ENCODE measurements at regions of chr12 and their contacts with region 1.

Region 1: GRCh38 chr12:7995266-7995963 is 37.1 kb upstream of the FOXJ2 start:
- DNase-seq: peak; percentile 93
- ATAC-seq: peak; percentile 80
- H3K4me3 Mint-ChIP-seq: no peak overlapping the region
- H3K27ac Mint-ChIP-seq: no peak overlapping the region
- H3K4me1 Mint-ChIP-seq: peaks cover 23% of the 10 kb centered on the region
- H3K27me3 Mint-ChIP-seq: no peaks in the 10 kb centered on the region

Region 2: GRCh38 chr12:7645394-7646177 is 349.8 kb before region 1 on chr12:
- CTCF ChIA-PET with region 1: interaction called, 3 read pairs
- POLR2A ChIA-PET with region 1: no interaction called
- intact Hi-C with region 1: loop called in 1 of 2 experiments (anchors 10 kb)
- DNase-seq: peak; percentile 49
- ATAC-seq: no peak
- H3K4me3 Mint-ChIP-seq: no peak overlapping the region
- H3K27ac Mint-ChIP-seq: no peak overlapping the region
- H3K4me1 Mint-ChIP-seq: peaks cover 7% of the 10 kb centered on the region
- H3K27me3 Mint-ChIP-seq: no peaks in the 10 kb centered on the region

Region 3: DNA sequence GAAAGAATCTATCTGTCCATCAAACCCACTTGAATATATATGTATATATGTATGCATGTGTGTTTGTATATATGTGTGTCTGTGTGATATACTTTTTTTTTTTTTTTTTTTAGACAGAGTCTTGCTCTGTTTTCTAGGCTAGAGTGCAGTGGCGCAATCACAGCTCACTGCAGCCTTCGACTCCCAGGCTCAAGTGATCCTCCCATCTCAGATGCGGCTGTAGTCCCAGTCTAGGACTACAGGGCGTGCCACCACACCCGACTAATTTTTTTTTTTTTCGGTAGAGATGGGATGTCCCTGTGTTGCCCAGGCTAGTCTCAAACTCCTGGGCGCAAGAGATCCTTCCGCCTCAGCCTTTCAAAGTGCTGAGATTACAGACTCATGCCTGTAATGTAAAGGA is 316.7 kb before region 1 on chr12:
- CTCF ChIA-PET with region 1: no interaction called
- POLR2A ChIA-PET with region 1: no interaction called
- intact Hi-C with region 1: loop called in 1 of 2 experiments (anchors 10 kb)
- DNase-seq: no peak
- ATAC-seq: no peak
- H3K4me3 Mint-ChIP-seq: no peak overlapping the region
- H3K27ac Mint-ChIP-seq: no peak overlapping the region
- H3K4me1 Mint-ChIP-seq: peaks cover 11% of the 10 kb centered on the region
- H3K27me3 Mint-ChIP-seq: peaks cover 2% of the 10 kb centered on the region

Region 4: DNA sequence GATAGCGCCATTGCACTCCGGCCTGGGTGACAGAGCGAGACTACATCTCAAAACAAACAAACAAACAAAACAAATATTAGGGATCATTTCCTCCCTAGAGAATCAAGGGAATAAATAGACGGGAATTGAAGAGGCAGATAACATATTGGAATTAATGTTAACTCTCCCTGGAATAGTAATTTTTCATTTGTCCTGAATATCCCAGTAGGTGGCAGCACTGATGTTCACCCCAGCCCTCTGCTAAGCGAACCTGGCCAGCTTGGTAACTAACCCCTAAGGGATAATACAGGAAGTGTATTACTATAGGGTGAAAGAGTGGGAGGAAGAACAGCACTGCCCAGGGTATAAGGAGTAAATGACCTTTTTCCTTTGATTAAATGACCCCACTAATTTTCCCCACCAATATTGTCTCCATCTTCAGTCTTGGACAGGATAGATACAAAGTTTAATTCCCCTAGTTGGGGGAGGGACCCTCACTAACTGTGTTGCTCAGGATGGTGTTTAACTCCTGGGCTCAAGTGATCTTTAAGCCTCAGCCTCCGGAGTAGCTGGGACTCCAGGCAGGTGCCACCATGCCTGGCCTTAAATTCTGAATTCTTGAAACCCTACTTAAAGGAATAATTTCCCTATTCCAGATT is 163.2 kb before region 1 on chr12:
- CTCF ChIA-PET with region 1: interaction called, 5 read pairs
- POLR2A ChIA-PET with region 1: no interaction called
- intact Hi-C with region 1: loop called in 1 of 2 experiments (anchors 1 kb)
- DNase-seq: peak; percentile 61
- ATAC-seq: peak; percentile 92
- H3K4me3 Mint-ChIP-seq: no peak overlapping the region
- H3K27ac Mint-ChIP-seq: no peak overlapping the region
- H3K4me1 Mint-ChIP-seq: peaks cover 3% of the 10 kb centered on the region
- H3K27me3 Mint-ChIP-seq: no peaks in the 10 kb centered on the region

Region 5: GRCh38 chr12:7859552-7859951 is 135.9 kb before region 1 on chr12:
- CTCF ChIA-PET with region 1: interaction called, 34 read pairs
- POLR2A ChIA-PET with region 1: no interaction called
- intact Hi-C with region 1: loop called (anchors 1 kb)
- DNase-seq: no peak
- ATAC-seq: no peak
- H3K4me3 Mint-ChIP-seq: no peak overlapping the region
- H3K27ac Mint-ChIP-seq: no peak overlapping the region
- H3K4me1 Mint-ChIP-seq: peaks cover 16% of the 10 kb centered on the region
- H3K27me3 Mint-ChIP-seq: no peaks in the 10 kb centered on the region

Region 6: GRCh38 chr12:7959701-7960121 is 35.7 kb before region 1 on chr12:
- CTCF ChIA-PET with region 1: interaction called, 16 read pairs
- POLR2A ChIA-PET with region 1: interaction called, 7 read pairs
- intact Hi-C with region 1: loop called (anchors 1 kb)
- DNase-seq: peak; percentile 60
- ATAC-seq: peak; percentile 34
- H3K4me3 Mint-ChIP-seq: peak overlapping the region; percentile 86
- H3K27ac Mint-ChIP-seq: peak overlapping the region; percentile 94
- H3K4me1 Mint-ChIP-seq: peaks cover 30% of the 10 kb centered on the region
- H3K27me3 Mint-ChIP-seq: no peaks in the 10 kb centered on the region

Region 7: GRCh38 chr12:7984900-7985299 is 10.5 kb before region 1 on chr12:
- CTCF ChIA-PET with region 1: no interaction called
- POLR2A ChIA-PET with region 1: no interaction called
- intact Hi-C with region 1: no loop called
- DNase-seq: no peak
- ATAC-seq: no peak
- H3K4me3 Mint-ChIP-seq: no peak overlapping the region
- H3K27ac Mint-ChIP-seq: no peak overlapping the region
- H3K4me1 Mint-ChIP-seq: peaks cover 17% of the 10 kb centered on the region
- H3K27me3 Mint-ChIP-seq: no peaks in the 10 kb centered on the region

Region 8: DNA sequence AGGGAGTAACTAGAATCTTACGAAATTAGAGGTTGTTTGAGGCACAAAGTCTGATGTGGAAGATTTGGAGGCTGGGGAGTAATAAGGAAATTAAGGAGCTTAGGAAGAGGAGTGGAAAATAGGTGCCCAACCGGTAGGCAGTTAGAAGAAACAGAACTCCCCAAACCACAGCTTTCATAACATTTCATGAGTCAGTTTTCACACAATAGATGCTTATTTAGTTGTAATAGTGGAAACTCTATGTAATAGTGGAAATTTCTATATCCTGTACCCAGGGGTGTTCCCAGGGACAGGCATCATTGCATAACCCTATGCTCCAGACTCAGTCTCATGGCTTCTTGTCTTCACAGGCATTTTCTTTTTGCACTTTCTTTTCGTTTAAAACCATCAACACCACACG is 62.4 kb after region 1 on chr12:
- CTCF ChIA-PET with region 1: no interaction called
- POLR2A ChIA-PET with region 1: no interaction called
- intact Hi-C with region 1: no loop called
- DNase-seq: no peak
- ATAC-seq: peak; percentile 65
- H3K4me3 Mint-ChIP-seq: no peak overlapping the region
- H3K27ac Mint-ChIP-seq: no peak overlapping the region
- H3K4me1 Mint-ChIP-seq: peaks cover 15% of the 10 kb centered on the region
- H3K27me3 Mint-ChIP-seq: no peaks in the 10 kb centered on the region

Measured in activated CD4-positive, alpha-beta T cell treated with anti-CD3 and anti-CD28 coated beads for 36 hours (primary cell).